ENCODE measurements at regions of chr5 and their contacts with region 1.

Region 1: DNA sequence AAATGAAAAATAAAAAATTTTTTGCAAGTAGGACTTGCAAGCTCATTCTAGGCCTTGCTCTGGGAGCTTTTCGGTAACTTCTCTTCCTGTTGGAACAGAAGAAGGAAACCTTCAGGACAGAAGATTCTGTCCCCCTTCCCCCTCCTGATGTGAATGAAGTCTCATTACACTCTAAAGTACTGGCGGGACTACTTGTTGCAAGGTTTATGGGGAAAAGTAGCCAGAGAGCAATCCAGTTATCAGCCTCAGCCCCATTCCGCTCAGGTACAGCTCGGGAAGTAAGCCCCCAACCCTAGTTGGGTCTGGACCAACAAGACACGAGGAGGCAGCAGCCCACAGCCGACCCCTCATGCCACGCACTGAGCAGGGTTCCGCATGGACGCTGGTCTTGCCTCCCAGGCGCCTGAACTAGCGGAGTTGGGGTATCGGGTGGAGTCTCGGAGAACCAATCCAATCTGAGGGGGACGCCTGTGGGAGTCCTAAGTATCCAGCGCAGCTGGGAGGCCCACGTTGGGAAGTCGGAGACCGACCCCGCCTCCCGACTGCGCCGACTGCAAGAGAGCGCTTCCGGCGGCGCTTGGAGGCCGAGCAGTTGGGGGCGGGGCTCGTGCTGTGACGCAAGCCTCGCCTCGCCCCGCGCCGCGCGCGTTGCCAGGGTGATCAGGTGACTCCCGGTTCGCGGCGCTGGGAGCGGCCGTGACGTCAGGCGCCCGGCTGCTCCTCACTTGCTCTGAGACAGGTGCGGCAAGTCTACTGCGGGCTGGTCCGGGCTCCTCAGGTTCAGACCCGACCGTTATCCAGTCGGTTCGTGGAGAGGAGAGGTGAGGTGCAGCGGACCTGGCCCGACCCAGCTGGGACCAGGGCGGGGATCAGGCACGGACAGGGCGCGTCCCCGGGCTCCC is at the start of gene CYSTM1:
- DNase-seq: peak; percentile 98
- H3K4me3 Mint-ChIP-seq: peak within 1 kb of the TSS; percentile 89
- H3K27ac Mint-ChIP-seq: peak within 1 kb of the TSS; percentile 98
- H3K4me1 Mint-ChIP-seq: peaks cover 11% of the 10 kb centered on the region
- H3K27me3 Mint-ChIP-seq: no peaks in the 10 kb centered on the region
- CTCF ChIP-seq: no peak
- total RNA-seq, gene CYSTM1: 59.4 and 105 TPM in 2 replicates

Region 2: GRCh38 chr5:139765409-139766217 is 409.1 kb before region 1 on chr5:
- CTCF ChIA-PET with region 1: no interaction called
- POLR2A ChIA-PET with region 1: no interaction called
- intact Hi-C with region 1: no loop called
- DNase-seq: peak; percentile 85
- H3K4me3 Mint-ChIP-seq: peak overlapping the region; percentile 54
- H3K27ac Mint-ChIP-seq: no peak overlapping the region
- H3K4me1 Mint-ChIP-seq: peaks cover 13% of the 10 kb centered on the region
- H3K27me3 Mint-ChIP-seq: no peaks in the 10 kb centered on the region
- CTCF ChIP-seq: peak; percentile 98

Region 3: DNA sequence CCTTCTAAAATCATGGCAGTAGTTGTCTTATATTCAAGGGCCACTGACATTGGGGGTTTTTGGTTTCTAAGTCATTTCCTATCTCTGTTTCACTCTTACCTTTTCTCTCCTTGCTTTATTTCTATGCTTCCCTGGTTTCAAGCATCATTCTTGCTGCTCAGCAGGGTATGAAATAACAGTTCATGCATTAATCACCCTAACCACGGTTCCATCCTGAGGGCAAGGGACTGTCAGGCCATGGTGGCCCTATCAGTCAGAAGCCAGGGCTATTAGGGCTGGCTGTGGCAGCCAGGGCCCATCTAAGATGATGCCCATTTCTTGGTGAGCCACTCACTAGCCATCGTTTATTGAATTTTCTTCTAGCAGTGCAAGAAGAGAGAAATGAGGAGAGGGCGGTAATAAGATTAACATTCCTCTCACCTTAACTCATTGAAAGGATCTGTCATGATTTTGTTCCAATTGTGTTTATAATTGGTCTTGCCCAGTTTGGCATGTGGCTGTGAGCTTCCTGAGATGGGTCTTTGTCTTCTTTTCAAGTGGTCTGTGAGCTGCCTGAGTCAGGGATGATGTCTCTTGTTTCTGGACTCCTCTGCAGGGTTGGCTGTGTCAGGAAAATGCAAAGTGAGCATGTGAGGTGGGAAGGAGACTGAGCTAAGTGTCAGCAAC is 45.4 kb after region 1 on chr5:
- CTCF ChIA-PET with region 1: interaction called, 3 read pairs
- POLR2A ChIA-PET with region 1: interaction called, 10 read pairs
- intact Hi-C with region 1: loop called (anchors 5 kb)
- DNase-seq: no peak
- H3K4me3 Mint-ChIP-seq: no peak overlapping the region
- H3K27ac Mint-ChIP-seq: no peak overlapping the region
- H3K4me1 Mint-ChIP-seq: peaks cover 42% of the 10 kb centered on the region
- H3K27me3 Mint-ChIP-seq: no peaks in the 10 kb centered on the region
- CTCF ChIP-seq: no peak

Region 4: DNA sequence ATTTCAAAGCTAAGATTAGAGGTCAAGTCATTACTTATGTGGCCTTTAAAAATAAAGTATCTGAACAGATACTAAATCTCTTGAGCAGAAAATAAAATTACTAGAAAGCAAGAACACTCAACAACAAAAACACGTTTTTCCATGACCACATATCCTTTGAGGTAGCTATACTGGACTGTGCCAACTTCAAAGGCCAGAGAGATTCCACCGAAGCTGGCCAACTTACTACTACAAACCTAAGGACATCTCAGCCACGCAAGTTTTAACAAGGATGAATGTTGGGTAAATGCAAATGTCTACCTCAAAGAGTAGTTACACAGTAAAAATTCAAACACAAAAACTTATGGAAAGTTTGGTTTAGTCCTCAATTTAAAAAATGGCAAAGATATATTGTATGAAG is 109.3 kb after region 1 on chr5:
- CTCF ChIA-PET with region 1: no interaction called
- POLR2A ChIA-PET with region 1: no interaction called
- intact Hi-C with region 1: no loop called
- DNase-seq: no peak
- H3K4me3 Mint-ChIP-seq: no peak overlapping the region
- H3K27ac Mint-ChIP-seq: no peak overlapping the region
- H3K4me1 Mint-ChIP-seq: no peaks in the 10 kb centered on the region
- H3K27me3 Mint-ChIP-seq: no peaks in the 10 kb centered on the region
- CTCF ChIP-seq: no peak

Measured in MCF 10A (cell line).